ENCODE measurements at regions of chr12 and their contacts with region 1.

Region 1: DNA sequence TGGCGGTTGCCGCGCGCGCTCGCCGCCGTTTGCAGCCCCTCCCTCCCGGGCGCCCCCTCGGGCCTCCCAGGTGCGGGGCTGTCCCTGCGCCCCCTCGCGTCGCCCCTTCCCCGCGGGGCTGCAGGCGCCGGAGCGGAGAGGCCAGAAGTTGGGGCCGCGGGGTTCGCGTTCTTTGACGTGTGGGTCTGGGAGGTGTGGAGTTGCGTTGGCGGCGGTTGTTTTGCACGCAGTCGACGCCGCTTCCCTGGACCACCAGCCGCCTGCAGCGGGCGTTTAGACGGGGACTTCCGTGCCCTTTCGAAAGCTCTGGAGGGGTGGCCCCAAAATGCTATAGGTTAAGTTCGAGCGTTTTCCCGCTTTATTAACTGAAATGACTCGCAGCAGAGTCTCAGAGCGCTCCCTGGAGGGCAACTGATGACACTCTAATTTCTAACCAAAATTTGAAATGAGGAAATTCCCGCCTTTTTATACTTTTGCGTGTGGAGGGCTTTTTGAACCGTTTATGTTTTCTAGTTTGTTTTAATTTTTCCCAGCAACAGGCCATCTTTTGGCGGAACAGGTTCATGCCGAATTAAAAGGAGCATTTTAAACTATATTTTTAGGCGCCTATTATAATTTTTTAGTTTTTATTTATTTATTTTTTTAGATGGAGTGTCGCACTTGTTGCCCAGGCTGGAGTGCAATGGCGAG is 939 bp downstream of the TMPO start:
- DNase-seq: peak; percentile 95
- ATAC-seq: peak; percentile 69
- H3K4me3 Mint-ChIP-seq: peak overlapping the region; percentile 90
- H3K27ac Mint-ChIP-seq: peak overlapping the region; percentile 98
- H3K4me1 Mint-ChIP-seq: peaks cover 26% of the 10 kb centered on the region
- H3K27me3 Mint-ChIP-seq: no peaks in the 10 kb centered on the region

Region 2: GRCh38 chr12:98490501-98491453 is 25.6 kb before region 1 on chr12:
- CTCF ChIA-PET with region 1: interaction called, 78 read pairs
- DNase-seq: peak; percentile 86
- ATAC-seq: peak; percentile 83
- H3K4me3 Mint-ChIP-seq: peak overlapping the region; percentile 30
- H3K27ac Mint-ChIP-seq: peak overlapping the region; percentile 90
- H3K4me1 Mint-ChIP-seq: peaks cover 5% of the 10 kb centered on the region
- H3K27me3 Mint-ChIP-seq: peaks cover 13% of the 10 kb centered on the region

Region 3: DNA sequence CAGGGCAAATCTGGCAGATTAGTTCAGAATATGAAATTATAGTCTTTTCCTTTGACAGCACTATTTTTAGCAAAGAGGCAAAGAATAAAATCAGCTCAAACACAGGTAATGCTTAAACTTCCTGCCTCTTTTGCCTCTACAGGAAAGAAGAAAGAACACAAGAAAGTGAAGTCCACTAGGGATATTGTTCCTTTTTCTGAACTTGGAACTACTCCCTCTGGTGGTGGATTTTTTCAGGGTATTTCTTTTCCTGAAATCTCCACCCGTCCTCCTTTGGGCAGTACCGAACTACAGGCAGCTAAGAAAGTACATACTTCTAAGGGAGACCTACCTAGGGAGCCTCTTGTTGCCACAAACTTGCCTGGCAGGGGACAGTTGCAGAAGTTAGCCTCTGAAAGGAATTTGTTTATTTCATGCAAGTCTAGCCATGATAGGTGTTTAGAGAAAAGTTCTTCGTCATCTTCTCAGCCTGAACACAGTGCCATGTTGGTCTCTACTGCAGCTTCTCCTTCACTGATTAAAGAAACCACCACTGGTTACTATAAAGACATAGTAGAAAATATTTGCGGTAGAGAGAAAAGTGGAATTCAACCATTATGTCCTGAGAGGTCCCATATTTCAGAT is 16.5 kb after region 1 on chr12:
- CTCF ChIA-PET with region 1: interaction called, 24 read pairs
- DNase-seq: no peak
- ATAC-seq: peak; percentile 47
- H3K4me3 Mint-ChIP-seq: no peak overlapping the region
- H3K27ac Mint-ChIP-seq: peak overlapping the region; percentile 40
- H3K4me1 Mint-ChIP-seq: peaks cover 20% of the 10 kb centered on the region
- H3K27me3 Mint-ChIP-seq: no peaks in the 10 kb centered on the region

Region 4: DNA sequence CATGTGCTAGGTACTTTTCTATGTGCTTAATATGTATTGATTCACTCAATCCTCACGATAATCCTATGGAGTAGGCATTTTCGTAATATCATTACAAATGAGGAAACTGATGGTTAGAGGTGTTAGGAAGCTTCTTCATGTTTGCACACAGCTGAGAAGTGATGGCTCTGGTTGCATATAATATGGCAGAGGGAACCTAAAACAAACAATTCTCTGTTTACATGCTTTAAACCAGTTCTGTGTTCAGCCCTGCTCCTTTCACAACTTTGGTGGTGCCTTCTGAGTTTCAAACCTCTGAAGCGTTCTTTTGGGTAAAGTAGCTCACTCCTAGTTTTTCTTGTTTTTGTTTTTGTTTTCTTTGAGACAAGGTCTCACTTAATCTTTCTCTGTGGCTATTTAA is 34.5 kb after region 1 on chr12:
- CTCF ChIA-PET with region 1: no interaction called
- DNase-seq: no peak
- ATAC-seq: no peak
- H3K4me3 Mint-ChIP-seq: no peak overlapping the region
- H3K27ac Mint-ChIP-seq: no peak overlapping the region
- H3K4me1 Mint-ChIP-seq: peaks cover 3% of the 10 kb centered on the region
- H3K27me3 Mint-ChIP-seq: no peaks in the 10 kb centered on the region

Region 5: GRCh38 chr12:98593351-98594049 is 77.2 kb after region 1 on chr12 and contains the start of gene SLC25A3:
- CTCF ChIA-PET with region 1: interaction called, 16 read pairs
- DNase-seq: peak; percentile 96
- ATAC-seq: peak; percentile 96
- H3K4me3 Mint-ChIP-seq: peak within 1 kb of the TSS; percentile 92
- H3K27ac Mint-ChIP-seq: peak within 1 kb of the TSS; percentile 98
- H3K4me1 Mint-ChIP-seq: peaks cover 30% of the 10 kb centered on the region
- H3K27me3 Mint-ChIP-seq: no peaks in the 10 kb centered on the region
- total RNA-seq, gene SLC25A3: 360 to 485 TPM